Lower leg skin (tissue), 4 donors: ENCODE measurements at regions of chr6 and their contacts with region 1.

Region 1: GRCh38 chr6:91751526-91751925 is 1164.7 kb upstream of the MAP3K7 start:
- DNase-seq: no peak
- H3K4me3 ChIP-seq: no peak overlapping the region
- CTCF ChIP-seq: no peak
- POLR2A ChIP-seq: no peak

Region 2: DNA sequence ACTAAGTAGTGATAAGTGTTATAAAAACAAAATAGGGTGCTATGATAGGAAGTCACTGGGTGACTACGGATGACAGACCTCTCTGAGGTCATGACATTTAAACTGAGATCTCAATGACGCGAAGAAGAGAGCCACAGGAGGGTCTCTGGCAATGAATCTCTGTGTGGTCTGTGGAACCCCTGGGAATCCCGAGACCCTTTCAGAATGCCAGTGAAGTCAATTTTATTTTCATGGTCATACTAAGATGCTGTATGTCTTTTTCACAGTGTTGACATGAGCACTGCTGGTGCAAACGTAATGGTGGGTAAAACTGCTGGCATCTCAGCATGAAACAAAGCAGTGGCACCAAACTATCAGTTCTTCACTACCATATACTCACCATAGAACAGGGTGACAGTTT is 1702.2 kb before region 1 on chr6:
- intact Hi-C with region 1: no loop called
- DNase-seq: no peak
- H3K4me3 ChIP-seq: no peak overlapping the region
- CTCF ChIP-seq: no peak
- POLR2A ChIP-seq: no peak

Region 3: GRCh38 chr6:91904586-91905164 is 153.1 kb after region 1 on chr6:
- intact Hi-C with region 1: no loop called
- DNase-seq: no peak
- H3K4me3 ChIP-seq: no peak overlapping the region
- CTCF ChIP-seq: no peak
- POLR2A ChIP-seq: no peak

Region 4: GRCh38 chr6:93474733-93475179 is 1723.2 kb after region 1 on chr6:
- intact Hi-C with region 1: loop called (anchors 5 kb)
- DNase-seq: no peak
- H3K4me3 ChIP-seq: no peak overlapping the region
- CTCF ChIP-seq: no peak
- POLR2A ChIP-seq: no peak